ENCODE measurements at regions of chr19 and their contacts with region 1.

Region 1: DNA sequence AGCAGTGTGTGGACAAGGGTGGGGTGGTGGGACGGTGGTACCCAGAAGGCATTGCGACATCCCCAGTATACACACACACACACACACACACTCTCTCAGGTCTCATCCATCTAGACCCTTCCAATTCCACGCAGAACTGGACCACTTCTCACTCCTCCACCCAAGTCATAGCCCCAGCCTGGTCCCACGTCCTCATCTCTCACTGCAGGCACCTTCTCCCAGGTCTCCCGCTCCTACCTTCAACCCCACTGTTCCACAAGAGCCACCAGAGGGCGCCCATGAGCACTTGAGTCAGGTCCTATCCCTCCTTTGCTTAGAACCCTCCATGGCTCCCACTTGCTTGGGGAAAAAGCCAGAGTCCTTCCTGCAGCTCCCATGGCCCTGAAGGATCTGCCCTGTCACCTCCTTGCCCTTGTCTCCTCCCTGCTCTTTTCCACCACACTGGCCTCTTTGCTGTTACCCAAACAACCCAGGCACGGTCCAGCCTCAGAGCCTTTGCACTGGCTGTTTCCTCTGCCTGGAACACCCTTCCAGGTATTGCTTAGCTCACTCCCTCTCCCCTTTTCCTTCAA is 62.6 kb downstream of the IER2 start:
- DNase-seq: peak; percentile 85
- H3K4me3 Mint-ChIP-seq: no peak overlapping the region
- H3K27ac Mint-ChIP-seq: peak overlapping the region; percentile 1
- H3K4me1 Mint-ChIP-seq: peaks cover 21% of the 10 kb centered on the region
- H3K27me3 Mint-ChIP-seq: no peaks in the 10 kb centered on the region

Region 2: DNA sequence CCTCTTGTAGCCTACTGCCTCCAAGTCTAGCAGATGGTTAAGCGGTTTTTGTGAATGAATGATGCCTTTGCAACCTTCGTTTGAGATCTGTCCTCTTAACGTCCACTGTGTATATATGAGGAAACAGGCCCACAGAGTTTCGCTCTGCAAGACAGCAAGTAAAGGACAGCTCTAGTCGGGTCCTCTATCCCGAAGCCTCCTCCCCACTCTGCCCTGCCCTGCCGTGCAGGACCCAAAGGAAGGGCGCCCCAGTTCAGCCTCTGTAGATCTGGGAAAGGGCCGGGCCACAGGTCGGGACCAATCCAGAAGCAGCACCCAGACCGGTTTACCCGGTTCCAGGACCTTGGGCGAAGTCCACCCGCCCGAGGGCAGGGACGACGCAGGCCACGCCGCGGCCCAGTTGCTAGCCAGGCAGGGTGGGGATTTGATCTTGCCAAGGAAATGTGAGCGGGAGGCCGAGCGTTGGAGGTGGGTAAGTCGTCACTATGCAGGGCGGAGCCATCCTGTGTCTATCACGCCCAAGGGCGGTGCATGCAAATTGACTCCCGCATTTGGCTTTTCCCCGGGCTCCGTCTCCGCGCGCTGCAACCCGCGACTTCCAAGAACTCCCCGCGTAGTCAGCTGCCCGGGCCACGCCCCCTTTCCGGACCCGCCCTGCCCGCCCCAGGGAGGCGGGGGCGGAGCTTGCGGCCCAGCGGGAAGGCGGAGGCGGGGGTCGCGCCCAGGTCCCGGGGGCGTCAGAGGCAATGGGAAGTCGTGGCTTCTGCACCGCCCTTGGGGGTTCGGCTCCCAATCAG is 50.1 kb before region 1 on chr19:
- CTCF ChIA-PET with region 1: no interaction called
- POLR2A ChIA-PET with region 1: interaction called, 5 read pairs
- intact Hi-C with region 1: loop called (anchors 2 kb)
- DNase-seq: peak; percentile 96
- H3K4me3 Mint-ChIP-seq: peak overlapping the region; percentile 87
- H3K27ac Mint-ChIP-seq: peak overlapping the region; percentile 99
- H3K4me1 Mint-ChIP-seq: peaks cover 60% of the 10 kb centered on the region
- H3K27me3 Mint-ChIP-seq: no peaks in the 10 kb centered on the region

Region 3: DNA sequence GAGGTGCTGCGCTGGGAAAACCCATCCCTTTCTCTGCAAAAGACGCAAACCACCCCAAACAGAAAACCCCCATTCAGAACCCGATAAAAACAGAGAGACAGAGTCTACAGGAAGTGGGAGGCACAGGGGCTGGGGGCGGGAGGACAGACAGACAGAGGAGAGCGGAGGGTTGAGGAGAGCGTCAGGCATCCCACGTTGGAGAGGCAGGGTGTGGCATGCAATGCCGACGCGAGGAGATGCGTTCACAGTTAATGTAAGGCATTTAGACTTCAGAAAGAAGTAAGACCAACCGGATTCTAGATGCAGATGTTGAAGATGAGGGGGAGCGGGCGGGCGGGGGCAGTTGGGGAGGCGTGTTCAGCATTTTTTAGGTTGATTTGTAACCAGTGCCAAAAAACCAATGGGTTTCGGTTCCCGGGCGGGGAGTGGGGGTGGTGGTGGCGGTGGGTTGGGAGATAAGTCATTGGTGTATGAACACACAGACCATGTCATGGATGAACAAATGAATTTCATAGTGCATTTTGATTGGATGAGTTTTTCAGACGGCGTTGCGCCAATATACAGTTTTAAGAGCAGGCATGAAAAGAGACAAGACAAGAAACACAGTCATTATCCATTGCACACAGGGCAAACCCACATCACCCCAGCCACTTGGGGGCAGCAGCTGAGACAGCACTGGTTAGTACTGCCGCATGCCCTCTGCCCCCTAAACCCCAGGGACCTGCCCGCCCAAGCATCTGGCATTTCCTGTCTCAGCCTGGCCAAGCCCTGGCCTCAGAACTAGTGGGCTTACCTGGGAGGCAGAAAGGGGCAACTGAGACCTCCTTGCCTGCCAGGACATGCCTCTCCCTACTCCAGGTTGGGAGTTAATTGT is 28.6 kb after region 1 on chr19:
- CTCF ChIA-PET with region 1: no interaction called
- POLR2A ChIA-PET with region 1: no interaction called
- intact Hi-C with region 1: loop called (anchors 2 kb)
- DNase-seq: peak; percentile 75
- H3K4me3 Mint-ChIP-seq: peak overlapping the region; percentile 46
- H3K27ac Mint-ChIP-seq: peak overlapping the region; percentile 29
- H3K4me1 Mint-ChIP-seq: peaks cover 23% of the 10 kb centered on the region
- H3K27me3 Mint-ChIP-seq: no peaks in the 10 kb centered on the region

Region 4: DNA sequence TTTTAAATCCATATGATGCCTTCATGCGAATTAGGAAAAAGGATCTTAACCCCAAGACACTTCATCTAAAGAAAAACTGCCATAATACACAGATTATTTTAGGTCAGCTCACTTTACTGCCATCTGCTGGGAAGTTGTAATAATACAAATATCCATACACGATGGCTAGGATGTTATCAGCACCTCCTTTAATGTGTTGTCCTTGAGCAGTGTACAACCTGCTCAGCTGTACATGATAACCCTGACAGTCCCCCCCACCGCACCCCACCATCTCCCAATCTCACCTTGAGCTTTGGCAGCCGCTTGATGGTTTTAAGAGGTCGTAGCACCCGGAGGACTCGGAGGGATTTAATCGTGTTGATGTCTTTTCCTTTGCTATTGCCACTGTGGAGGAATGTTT is 49.6 kb after region 1 on chr19:
- CTCF ChIA-PET with region 1: interaction called, 13 read pairs
- POLR2A ChIA-PET with region 1: interaction called, 3 read pairs
- intact Hi-C with region 1: loop called (anchors 5 kb)
- DNase-seq: no peak
- H3K4me3 Mint-ChIP-seq: no peak overlapping the region
- H3K27ac Mint-ChIP-seq: no peak overlapping the region
- H3K4me1 Mint-ChIP-seq: peaks cover 14% of the 10 kb centered on the region
- H3K27me3 Mint-ChIP-seq: peaks cover 13% of the 10 kb centered on the region

Region 5: GRCh38 chr19:13597640-13598039 is 384.8 kb after region 1 on chr19:
- CTCF ChIA-PET with region 1: no interaction called
- POLR2A ChIA-PET with region 1: no interaction called
- intact Hi-C with region 1: no loop called
- DNase-seq: peak; percentile 66
- H3K4me3 Mint-ChIP-seq: no peak overlapping the region
- H3K27ac Mint-ChIP-seq: no peak overlapping the region
- H3K4me1 Mint-ChIP-seq: peaks cover 4% of the 10 kb centered on the region
- H3K27me3 Mint-ChIP-seq: peaks cover 10% of the 10 kb centered on the region